Activated T-helper 2 cell treated with anti-CD3 and anti-CD28 coated beads, Interferon-gamma antibody, Interleukin-2, Interleukin-4, amounts not matched to agents 10 μg/mL and 5 μg/mL and 100 μg/mL, durations not matched to agents 14 hours and 24 hours and 36 hours (primary cell): ENCODE measurements at regions of chr1 and their contacts with region 1.

Region 1: DNA sequence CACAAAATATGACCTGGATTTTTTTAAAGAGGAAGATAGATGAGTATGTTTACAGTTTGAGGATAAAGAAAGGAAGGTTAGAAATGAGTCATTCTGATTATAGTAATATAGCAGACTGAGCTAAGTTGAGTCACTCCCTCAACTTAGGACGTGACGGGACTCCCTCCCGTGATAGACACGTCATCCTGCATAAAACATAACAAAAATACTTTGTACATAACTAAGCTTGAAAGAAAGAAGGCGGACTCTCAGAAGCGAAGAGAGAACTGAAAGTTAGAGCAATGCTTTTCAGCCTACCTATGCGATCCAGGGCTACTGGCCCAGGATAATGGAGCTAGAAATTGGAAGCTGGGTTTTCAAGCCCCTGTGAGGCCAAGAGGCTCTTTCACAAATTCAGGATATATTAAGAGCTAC is 53.0 kb upstream of the DESI2 start:
- DNase-seq: peak; percentile 49
- H3K4me3 Mint-ChIP-seq: peak overlapping the region; percentile 70
- H3K27ac Mint-ChIP-seq: peak overlapping the region; percentile 90
- H3K4me1 Mint-ChIP-seq: peaks cover 18% of the 10 kb centered on the region
- H3K27me3 Mint-ChIP-seq: peaks cover 4% of the 10 kb centered on the region

Region 2: GRCh38 chr1:243959998-243960397 is 639.9 kb before region 1 on chr1:
- intact Hi-C with region 1: no loop called
- DNase-seq: no peak
- H3K4me3 Mint-ChIP-seq: no peak overlapping the region
- H3K27ac Mint-ChIP-seq: no peak overlapping the region
- H3K4me1 Mint-ChIP-seq: no peaks in the 10 kb centered on the region
- H3K27me3 Mint-ChIP-seq: peaks cover 17% of the 10 kb centered on the region

Region 3: DNA sequence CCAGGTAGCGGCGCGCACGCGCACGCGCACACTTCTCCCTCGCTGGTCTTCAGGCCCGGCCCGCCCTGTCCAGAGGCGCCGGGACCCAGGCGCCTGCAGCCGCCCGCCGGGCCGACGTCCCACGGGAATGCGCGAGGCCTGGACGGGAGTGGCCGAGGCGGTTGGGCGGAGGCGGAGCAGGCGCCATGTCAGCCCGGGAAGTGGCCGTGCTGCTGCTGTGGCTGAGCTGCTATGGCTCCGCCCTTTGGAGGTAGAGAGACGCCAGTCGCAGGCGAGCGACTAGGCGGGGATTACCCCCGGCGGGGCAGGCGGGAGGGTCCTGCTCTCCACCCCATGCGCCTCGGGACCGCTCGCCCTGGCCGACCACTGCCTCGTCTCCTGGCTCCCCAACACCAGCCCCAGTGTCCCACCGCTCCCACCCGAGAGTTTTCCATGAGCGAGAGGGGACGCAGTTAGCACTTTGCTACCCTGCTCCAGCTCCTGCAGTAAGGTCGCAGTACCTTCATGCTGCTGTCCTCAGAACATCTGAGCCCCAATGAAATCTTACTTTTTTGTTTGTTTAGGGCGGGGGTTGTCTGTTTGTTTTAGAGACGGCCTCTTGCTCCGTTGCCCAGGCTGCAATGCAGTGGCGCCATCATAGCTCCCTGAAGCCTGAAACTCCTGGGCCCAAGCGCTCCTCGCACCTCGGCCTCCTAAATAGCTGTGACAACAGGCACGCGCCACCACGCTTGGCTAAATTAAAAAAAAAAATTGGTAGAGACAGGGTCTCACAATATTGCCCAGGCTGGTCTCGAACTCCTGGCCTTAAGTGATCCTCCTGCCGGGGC is 138.5 kb before region 1 on chr1 and contains the start of gene CATSPERE:
- intact Hi-C with region 1: loop called (anchors 5 kb)
- DNase-seq: peak; percentile 75
- H3K4me3 Mint-ChIP-seq: peak within 1 kb of the TSS; percentile 83
- H3K27ac Mint-ChIP-seq: peak within 1 kb of the TSS; percentile 88
- H3K4me1 Mint-ChIP-seq: peaks cover 13% of the 10 kb centered on the region
- H3K27me3 Mint-ChIP-seq: no peaks in the 10 kb centered on the region
- total RNA-seq, gene CATSPERE: 0.18 and 0.25 TPM in 2 replicates

Region 4: GRCh38 chr1:244614113-244614836 is 14.3 kb after region 1 on chr1:
- intact Hi-C with region 1: no loop called
- DNase-seq: no peak
- H3K4me3 Mint-ChIP-seq: no peak overlapping the region
- H3K27ac Mint-ChIP-seq: no peak overlapping the region
- H3K4me1 Mint-ChIP-seq: peaks cover 3% of the 10 kb centered on the region
- H3K27me3 Mint-ChIP-seq: peaks cover 2% of the 10 kb centered on the region

Region 5: DNA sequence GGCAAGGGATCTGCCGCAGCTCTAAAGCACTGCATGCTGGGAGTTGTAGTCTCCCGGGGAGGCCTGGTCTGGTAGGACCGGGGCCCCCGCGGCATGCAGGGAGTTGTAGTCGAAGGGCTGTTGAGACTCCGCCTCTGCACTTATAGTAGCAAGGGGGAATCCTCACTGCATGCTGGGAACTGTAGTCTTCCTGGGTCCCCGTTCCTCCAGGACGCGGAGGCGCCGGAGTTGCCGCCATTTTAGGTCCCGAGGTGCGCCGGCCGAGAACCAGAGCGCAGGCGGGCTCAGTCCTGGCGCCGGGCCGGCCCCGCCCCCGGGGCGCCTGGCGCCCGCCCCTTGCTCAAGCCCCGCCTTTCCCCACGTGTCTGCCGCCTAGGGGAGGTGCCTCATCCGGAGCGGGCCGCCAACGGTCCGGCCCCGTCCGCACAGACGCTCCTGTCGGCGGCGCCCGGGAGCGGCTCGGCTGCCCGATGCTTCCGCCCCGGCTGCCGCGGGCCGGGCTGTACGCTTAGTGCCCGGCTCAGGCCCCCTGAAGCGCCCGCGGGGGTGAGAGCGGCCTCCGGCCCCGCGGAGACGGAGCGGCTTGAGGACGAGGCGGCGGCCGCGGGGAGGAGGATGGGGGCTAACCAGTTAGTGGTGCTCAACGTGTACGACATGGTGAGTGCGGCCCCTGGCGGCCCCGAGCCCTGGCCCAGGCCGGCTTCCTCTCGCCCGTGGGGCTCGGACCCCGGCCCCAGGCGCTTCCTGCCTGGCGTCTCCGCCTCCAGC is 52.9 kb after region 1 on chr1 and contains the start of gene DESI2:
- intact Hi-C with region 1: loop called (anchors 1 kb)
- DNase-seq: peak; percentile 98
- H3K4me3 Mint-ChIP-seq: peak within 1 kb of the TSS; percentile 82
- H3K27ac Mint-ChIP-seq: peak within 1 kb of the TSS; percentile 71
- H3K4me1 Mint-ChIP-seq: peaks cover 20% of the 10 kb centered on the region
- H3K27me3 Mint-ChIP-seq: peaks cover 1% of the 10 kb centered on the region
- total RNA-seq, gene DESI2: 27.4 TPM in 2 replicates

Region 6: DNA sequence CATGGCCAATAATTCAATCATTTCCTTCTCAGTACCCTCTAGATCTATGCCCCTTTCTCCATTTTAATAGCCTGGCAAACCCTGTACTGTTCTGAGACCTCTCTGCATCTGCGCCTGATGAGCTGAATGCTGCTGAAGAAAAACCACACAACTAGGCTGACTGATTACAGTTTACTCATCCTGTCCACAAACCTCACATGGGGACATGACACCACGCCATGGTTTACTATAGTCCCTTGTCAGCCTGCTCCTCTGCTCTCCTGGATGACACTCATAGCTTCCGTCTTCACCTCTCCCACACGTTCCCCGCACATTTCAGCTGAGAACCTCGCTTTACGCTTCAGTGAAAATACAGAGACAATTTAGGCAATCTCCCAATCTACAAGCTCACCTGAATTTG is 112.7 kb after region 1 on chr1:
- intact Hi-C with region 1: loop called (anchors 10 kb)
- DNase-seq: no peak
- H3K4me3 Mint-ChIP-seq: no peak overlapping the region
- H3K27ac Mint-ChIP-seq: no peak overlapping the region
- H3K4me1 Mint-ChIP-seq: peaks cover 6% of the 10 kb centered on the region
- H3K27me3 Mint-ChIP-seq: peaks cover 3% of the 10 kb centered on the region

Region 7: DNA sequence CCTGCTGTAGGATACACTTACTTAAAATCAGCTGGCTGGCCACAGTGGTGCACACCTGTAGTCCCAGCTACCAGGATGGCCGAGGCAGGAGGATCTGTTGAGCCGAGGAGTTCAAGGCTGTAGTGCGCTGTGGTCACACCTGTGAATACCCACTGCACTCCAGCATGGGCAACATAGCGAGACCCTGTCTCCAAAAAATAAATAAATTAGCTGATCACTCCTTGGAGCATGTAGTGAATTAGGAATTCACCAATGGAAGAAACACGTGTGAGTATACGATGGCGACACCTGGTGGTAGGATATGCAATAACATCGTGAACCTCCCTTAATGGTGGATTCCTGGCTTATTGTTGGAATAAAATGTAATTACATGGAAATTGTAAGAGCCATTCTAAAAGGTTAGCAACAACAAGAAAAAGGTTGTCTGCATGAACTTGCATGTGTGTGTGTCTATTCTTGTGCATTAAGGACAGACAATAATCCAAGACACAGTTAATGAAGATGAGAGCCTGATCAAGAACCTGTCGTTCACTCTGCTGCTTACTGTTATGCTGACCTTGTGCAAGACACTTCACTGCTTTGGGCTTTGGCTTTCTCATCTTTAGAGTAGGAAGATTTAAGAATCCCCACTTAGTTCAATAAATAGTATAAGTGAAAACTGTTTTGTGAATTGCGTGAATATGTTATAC is 196.9 kb after region 1 on chr1:
- intact Hi-C with region 1: loop called (anchors 1 kb)
- DNase-seq: peak; percentile 11
- H3K4me3 Mint-ChIP-seq: no peak overlapping the region
- H3K27ac Mint-ChIP-seq: no peak overlapping the region
- H3K4me1 Mint-ChIP-seq: peaks cover 2% of the 10 kb centered on the region
- H3K27me3 Mint-ChIP-seq: peaks cover 2% of the 10 kb centered on the region

Region 8: GRCh38 chr1:244970661-244971551 is 371.0 kb after region 1 on chr1:
- intact Hi-C with region 1: loop called (anchors 1 kb)
- DNase-seq: peak; percentile 88
- H3K4me3 Mint-ChIP-seq: peak overlapping the region; percentile 91
- H3K27ac Mint-ChIP-seq: peak overlapping the region; percentile 98
- H3K4me1 Mint-ChIP-seq: peaks cover 13% of the 10 kb centered on the region
- H3K27me3 Mint-ChIP-seq: peaks cover 4% of the 10 kb centered on the region

Region 9: DNA sequence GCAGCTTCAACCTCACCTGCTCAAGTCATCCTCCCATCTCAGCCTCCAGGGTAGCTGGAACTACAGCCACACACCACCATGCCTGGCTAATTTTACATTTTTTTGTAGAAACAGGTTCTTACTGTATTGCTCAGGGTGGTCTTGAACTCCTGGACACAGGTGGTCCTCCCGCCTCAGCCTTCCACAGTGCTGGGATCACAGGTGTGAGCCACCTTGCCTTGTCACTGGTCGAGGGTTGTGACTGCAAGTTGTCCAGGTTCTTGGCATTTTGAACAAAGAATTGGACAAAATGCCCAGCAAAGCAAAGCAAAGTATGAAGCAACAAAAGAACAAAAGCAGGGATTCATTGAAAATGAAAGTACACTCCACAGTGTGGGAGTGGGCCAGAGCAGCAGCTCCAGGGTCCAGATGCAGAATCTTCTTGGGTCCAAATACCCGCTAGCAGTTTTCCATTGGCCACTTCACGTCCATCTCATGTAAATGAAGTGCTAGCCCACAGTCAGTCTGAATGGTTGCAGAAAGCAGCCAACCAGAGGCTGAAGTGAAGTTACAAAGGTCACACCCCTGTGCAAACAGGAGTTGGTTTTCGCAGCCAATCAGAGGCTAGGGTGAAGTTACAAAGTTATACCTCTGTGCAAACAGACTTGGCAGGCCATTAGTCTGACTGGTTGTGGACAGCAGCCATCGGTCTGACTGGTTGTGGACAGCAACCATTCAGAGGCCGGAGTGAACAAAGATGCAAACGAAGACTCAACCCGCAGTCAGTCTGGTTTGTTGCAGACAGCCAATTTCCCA is 445.3 kb after region 1 on chr1:
- intact Hi-C with region 1: loop called (anchors 1 kb)
- DNase-seq: no peak
- H3K4me3 Mint-ChIP-seq: no peak overlapping the region
- H3K27ac Mint-ChIP-seq: no peak overlapping the region
- H3K4me1 Mint-ChIP-seq: peaks cover 12% of the 10 kb centered on the region
- H3K27me3 Mint-ChIP-seq: no peaks in the 10 kb centered on the region